ENCODE measurements at regions of chr18 and their contacts with region 1.

Region 1: DNA sequence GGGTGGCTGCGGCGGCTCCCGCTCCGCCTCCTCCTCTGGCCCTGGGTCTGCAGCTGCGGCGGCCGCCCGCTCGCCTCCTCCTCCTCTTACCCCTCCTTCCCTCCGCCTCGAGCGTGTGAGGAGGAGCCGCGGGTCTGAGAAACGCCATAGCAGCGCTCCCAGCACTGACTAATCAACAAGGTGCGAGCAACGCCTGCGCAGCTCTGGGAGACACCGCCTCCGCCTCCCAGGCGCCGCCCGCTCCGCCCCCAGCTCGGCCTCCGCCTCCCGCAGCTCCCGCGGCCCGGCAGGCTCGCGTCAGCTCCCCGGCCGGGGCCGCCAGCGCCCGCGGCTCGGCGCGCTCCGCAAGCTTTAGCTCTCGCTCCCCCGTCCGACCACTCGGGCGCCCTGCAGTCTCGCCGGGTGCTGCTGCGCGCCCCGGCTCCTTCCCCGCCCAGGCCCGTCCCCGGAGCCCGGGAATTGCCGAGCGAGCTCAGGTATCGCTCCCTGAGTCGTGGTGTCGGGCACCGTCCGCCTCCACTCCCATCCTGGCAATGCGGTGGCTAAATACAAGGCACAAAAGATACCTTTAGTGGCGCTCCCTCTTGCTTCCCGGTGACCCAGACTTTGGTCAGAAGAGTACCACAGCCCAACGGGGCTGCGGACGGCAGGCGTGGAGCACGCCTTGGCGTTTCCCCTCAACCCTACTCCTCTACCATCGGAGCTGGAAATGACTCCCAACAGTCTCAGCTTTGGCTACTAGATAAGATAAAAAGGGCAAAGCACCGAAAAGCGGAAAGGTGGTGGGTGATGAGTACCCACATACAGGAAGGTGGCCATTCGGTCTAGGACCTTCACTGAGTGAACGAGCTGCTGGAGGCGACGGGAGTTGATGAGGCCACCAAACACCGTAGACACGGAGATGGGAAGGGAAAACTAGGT is at the start of gene GAREM1:
- H3K4me3 ChIP-seq: peak within 1 kb of the TSS; percentile 83
- H3K27ac ChIP-seq: peak within 1 kb of the TSS; percentile 70; the same call in 1 of the 2 replicates
- H3K4me1 ChIP-seq: peaks cover 3% of the 10 kb centered on the region; the same call in 1 of the 2 replicates
- CTCF ChIP-seq: peak; percentile 35; the same call in 1 of the 2 replicates

Region 2: DNA sequence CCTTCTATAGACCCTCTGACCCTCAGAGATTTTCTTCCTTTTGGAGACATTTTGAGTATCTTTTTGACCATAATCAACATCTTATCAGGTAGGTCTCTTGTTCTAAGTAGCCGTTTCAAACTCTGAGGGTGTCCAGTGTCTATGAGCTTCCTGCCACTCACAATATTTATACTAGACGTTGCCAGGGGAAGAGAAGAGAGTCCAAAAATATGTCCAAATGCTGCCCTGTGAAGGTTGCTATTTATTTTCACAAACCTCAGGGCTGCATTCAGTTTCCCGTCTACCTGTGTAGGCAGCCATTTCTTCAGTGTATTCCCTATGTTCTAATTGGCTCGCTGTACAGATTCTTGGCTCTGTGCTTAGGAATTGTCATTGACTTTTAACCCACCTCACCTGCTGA is 1154.0 kb before region 1 on chr18:
- CTCF ChIA-PET with region 1: no interaction called
- POLR2A ChIA-PET with region 1: no interaction called
- H3K4me3 ChIP-seq: no peak overlapping the region
- H3K27ac ChIP-seq: no peak overlapping the region
- H3K4me1 ChIP-seq: no peaks in the 10 kb centered on the region
- CTCF ChIP-seq: no peak

Region 3: DNA sequence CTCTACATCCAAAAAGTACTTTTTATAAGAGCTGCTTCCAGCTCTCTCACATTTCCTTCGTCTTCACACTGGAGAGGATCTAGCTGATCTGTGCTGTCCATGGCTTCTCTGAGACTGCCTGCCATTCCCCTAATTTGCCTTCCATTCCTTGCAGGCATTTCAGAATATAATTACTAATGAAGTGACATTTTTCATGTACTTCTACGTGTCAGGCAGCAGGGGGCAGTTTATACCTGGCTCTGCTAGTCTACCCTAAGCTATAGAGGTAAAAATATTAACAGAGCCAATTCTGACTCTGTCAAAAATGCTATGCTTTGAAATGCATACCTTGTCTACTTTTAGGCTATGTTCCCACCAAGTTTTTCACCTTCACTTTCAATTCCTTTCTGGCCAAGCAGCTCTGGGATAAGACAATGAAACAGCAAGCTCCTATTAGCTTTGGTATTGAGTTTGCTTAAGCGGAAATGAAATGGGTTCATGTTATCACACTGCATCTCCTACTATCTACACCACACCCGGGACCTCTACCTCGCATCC is 199.2 kb before region 1 on chr18:
- CTCF ChIA-PET with region 1: interaction called, 32 read pairs
- POLR2A ChIA-PET with region 1: interaction called, 12 read pairs
- H3K4me3 ChIP-seq: no peak overlapping the region
- H3K27ac ChIP-seq: no peak overlapping the region
- H3K4me1 ChIP-seq: no peaks in the 10 kb centered on the region
- CTCF ChIP-seq: peak; percentile 34

Region 4: GRCh38 chr18:32289483-32290075 is 181.4 kb before region 1 on chr18:
- CTCF ChIA-PET with region 1: interaction called, 62 read pairs
- POLR2A ChIA-PET with region 1: interaction called, 16 read pairs
- H3K4me3 ChIP-seq: no peak overlapping the region
- H3K27ac ChIP-seq: no peak overlapping the region
- H3K4me1 ChIP-seq: no peaks in the 10 kb centered on the region
- CTCF ChIP-seq: no peak

Region 5: DNA sequence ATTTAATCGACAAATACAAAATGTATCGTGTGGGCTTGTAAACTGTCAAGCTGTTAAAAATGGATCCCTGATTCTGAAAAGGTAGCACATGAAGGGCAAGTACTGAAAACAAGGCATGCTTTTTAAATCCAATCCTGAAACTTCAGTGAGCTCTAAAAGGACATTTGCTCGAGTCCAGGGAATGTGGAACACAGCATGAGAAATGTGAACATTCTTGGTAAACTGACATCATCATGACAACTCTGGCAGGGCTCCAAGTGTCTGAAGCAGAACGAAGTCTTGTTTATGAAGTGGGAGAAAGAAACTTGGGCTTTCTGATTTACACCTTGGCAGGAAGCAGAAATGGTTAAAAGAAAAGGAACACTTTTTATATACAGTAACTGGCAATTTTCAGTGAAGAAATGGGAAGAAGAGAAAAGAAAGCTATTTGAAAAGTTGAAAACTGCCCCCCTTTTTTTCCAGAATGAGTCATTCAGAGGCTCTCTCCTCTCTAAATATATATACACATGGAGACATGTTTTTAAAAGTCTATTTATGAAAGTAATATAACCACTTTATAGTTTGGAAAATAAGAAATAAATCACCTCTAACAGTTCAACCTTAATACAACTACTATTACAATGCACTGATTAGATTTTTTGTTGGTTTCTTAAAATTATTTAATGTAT is 121.1 kb before region 1 on chr18:
- CTCF ChIA-PET with region 1: interaction called, 11 read pairs
- POLR2A ChIA-PET with region 1: interaction called, 4 read pairs
- H3K4me3 ChIP-seq: no peak overlapping the region
- H3K27ac ChIP-seq: no peak overlapping the region
- H3K4me1 ChIP-seq: no peaks in the 10 kb centered on the region
- CTCF ChIP-seq: no peak

Region 6: DNA sequence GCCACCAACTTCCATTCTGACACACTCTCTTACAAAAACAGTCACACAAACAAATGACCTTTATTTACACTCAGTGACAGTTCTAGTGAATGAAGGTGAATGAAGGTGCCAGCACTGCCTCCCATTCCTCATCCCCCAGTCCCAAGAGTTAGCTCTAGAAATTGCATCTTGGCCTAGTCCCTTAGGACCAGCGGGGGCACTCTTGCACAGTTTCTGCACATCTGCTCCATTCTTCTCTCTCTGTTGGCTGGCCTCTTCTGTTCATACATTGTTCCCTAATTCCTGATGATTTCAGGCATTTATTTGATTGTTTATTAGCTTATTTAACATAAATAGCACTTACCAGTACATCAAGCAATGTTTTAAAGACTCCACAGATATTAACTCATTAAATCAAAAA is 31.2 kb before region 1 on chr18:
- CTCF ChIA-PET with region 1: interaction called, 31 read pairs
- POLR2A ChIA-PET with region 1: interaction called, 3 read pairs
- H3K4me3 ChIP-seq: no peak overlapping the region
- H3K27ac ChIP-seq: no peak overlapping the region
- H3K4me1 ChIP-seq: no peaks in the 10 kb centered on the region
- CTCF ChIP-seq: no peak

Region 7: GRCh38 chr18:32552421-32553030 is 81.6 kb after region 1 on chr18:
- CTCF ChIA-PET with region 1: interaction called, 17 read pairs
- POLR2A ChIA-PET with region 1: no interaction called
- H3K4me3 ChIP-seq: no peak overlapping the region
- H3K27ac ChIP-seq: no peak overlapping the region
- H3K4me1 ChIP-seq: no peaks in the 10 kb centered on the region
- CTCF ChIP-seq: peak; percentile 49; the same call in 1 of the 2 replicates

Region 8: GRCh38 chr18:33010149-33010548 is 539.2 kb after region 1 on chr18:
- CTCF ChIA-PET with region 1: no interaction called
- POLR2A ChIA-PET with region 1: no interaction called
- H3K4me3 ChIP-seq: no peak overlapping the region
- H3K27ac ChIP-seq: no peak overlapping the region
- H3K4me1 ChIP-seq: no peaks in the 10 kb centered on the region; the same call in 1 of the 2 replicates
- CTCF ChIP-seq: no peak

Region 9: DNA sequence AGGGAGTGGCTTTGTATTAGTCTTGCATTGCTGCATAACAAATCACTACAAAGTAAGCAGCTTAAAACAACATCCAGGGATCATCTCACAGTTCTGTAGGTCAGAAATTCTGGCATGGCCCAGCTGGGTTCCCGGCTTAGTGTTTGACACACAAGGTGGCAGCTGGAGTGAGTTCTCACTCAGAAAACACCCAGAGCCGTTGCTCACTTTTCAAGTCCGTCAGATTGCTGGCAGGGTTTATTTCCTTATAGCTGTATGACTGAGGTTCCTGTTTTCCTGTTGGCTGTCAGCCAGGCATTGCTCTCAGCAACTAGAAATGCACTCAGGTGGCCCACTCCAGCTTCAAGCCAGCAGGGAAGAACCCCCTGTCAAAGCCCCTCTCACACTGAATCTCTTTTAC is 645.4 kb after region 1 on chr18:
- CTCF ChIA-PET with region 1: no interaction called
- POLR2A ChIA-PET with region 1: no interaction called
- H3K4me3 ChIP-seq: no peak overlapping the region
- H3K27ac ChIP-seq: no peak overlapping the region
- H3K4me1 ChIP-seq: no peaks in the 10 kb centered on the region
- CTCF ChIP-seq: no peak

Region 10: DNA sequence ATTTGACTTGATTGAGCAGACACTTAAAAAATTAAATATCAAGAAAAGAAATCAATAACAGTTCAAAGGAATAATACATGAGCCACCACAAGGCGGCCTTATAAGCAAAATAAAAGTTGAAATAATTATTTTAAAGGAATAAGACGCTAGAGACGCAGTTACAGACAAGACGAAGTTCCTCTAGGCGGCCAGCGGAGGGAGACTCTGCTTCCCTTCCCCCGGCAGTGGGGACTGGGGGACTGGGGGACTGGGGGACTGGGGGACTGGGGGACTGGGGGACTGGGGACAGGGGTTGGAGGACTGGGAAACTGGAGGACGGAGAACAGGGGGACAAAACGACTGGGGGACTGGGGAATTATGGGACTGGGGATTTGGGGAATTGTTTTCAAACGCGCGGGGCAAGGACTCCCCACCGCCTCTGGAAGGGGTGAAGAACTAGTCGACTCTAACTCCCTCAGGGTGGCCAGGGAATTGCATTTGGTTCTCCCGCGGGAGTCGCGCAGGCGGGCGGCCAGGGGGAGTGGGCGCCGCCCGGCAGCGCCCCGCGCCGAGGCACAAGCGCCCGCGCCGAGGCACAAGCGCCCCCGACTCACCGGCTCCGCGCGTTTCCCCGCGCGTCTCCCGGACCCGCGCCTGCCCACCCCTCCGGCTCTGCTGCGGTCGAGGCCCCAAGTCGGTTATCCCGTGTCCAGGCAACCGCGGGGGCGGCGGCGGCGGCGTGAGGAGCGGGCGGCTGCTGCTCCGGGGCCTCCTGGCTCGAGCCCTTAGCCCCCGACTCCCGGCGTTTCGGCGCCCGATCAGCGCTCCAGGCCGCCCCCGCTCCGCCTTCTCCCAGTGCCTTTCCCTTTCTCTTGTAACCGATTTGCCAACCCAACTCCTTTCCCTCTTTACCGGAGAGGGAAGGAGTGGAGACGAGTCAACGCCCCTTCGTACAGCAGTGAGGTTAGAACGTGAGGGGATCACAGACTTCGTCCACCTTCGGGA is 969.4 kb after region 1 on chr18 and contains the start of gene CCDC178:
- CTCF ChIA-PET with region 1: no interaction called
- POLR2A ChIA-PET with region 1: no interaction called
- H3K4me3 ChIP-seq: peak within 1 kb of the TSS; percentile 48
- H3K27ac ChIP-seq: peak within 1 kb of the TSS; percentile 54; the same call in 1 of the 2 replicates
- H3K4me1 ChIP-seq: no peaks in the 10 kb centered on the region
- CTCF ChIP-seq: peak; percentile 22; the same call in 1 of the 2 replicates

Measured in HEK293 (cell line).